ENCODE measurements at regions of chr6 and their contacts with region 1.

Region 1: GRCh38 chr6:110873981-110874879 is at the start of gene AMD1:
- H3K4me3 ChIP-seq: peak within 1 kb of the TSS; percentile 92
- H3K27ac ChIP-seq: peak within 1 kb of the TSS; percentile 96
- H3K4me1 ChIP-seq: peaks cover 7% of the 10 kb centered on the region
- CTCF ChIP-seq: peak; percentile 37; the same call in 1 of the 2 replicates

Region 2: GRCh38 chr6:110682460-110682853 is 191.8 kb before region 1 on chr6:
- CTCF ChIA-PET with region 1: interaction called, 40 read pairs
- POLR2A ChIA-PET with region 1: interaction called, 34 read pairs
- H3K4me3 ChIP-seq: no peak overlapping the region
- H3K27ac ChIP-seq: no peak overlapping the region
- H3K4me1 ChIP-seq: no peaks in the 10 kb centered on the region
- CTCF ChIP-seq: peak; percentile 50; the same call in 1 of the 2 replicates

Region 3: GRCh38 chr6:110809792-110810191 is 64.4 kb before region 1 on chr6:
- CTCF ChIA-PET with region 1: interaction called, 13 read pairs
- POLR2A ChIA-PET with region 1: interaction called, 339 read pairs
- H3K4me3 ChIP-seq: no peak overlapping the region
- H3K27ac ChIP-seq: no peak overlapping the region
- H3K4me1 ChIP-seq: peaks cover 10% of the 10 kb centered on the region; the same call in 1 of the 2 replicates
- CTCF ChIP-seq: no peak

Region 4: GRCh38 chr6:110859335-110859792 is 14.9 kb before region 1 on chr6:
- CTCF ChIA-PET with region 1: interaction called, 6 read pairs
- POLR2A ChIA-PET with region 1: interaction called, 37 read pairs
- H3K4me3 ChIP-seq: no peak overlapping the region
- H3K27ac ChIP-seq: no peak overlapping the region
- H3K4me1 ChIP-seq: no peaks in the 10 kb centered on the region
- CTCF ChIP-seq: no peak

Region 5: DNA sequence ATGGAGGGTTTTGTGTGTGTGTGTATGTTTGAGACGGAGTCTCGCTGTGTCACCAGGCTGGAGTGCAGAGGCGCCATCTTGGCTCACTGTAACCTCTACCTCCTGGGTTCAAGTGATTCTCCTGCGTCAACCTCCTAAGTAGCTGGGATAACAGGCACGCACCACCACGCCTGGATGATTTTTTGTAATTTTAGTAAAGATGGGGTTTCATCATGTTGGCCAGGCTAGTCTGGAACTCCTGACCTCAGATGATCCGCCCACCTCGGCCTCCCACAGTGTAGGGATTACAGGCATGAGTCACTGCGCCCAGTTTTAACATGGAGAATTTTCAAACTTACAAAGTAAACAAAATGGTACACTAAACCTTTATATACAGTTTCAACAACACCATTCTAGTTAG is 23.2 kb after region 1 on chr6:
- CTCF ChIA-PET with region 1: interaction called, 6 read pairs
- POLR2A ChIA-PET with region 1: interaction called, 16 read pairs
- H3K4me3 ChIP-seq: no peak overlapping the region
- H3K27ac ChIP-seq: no peak overlapping the region
- H3K4me1 ChIP-seq: no peaks in the 10 kb centered on the region
- CTCF ChIP-seq: no peak

Region 6: DNA sequence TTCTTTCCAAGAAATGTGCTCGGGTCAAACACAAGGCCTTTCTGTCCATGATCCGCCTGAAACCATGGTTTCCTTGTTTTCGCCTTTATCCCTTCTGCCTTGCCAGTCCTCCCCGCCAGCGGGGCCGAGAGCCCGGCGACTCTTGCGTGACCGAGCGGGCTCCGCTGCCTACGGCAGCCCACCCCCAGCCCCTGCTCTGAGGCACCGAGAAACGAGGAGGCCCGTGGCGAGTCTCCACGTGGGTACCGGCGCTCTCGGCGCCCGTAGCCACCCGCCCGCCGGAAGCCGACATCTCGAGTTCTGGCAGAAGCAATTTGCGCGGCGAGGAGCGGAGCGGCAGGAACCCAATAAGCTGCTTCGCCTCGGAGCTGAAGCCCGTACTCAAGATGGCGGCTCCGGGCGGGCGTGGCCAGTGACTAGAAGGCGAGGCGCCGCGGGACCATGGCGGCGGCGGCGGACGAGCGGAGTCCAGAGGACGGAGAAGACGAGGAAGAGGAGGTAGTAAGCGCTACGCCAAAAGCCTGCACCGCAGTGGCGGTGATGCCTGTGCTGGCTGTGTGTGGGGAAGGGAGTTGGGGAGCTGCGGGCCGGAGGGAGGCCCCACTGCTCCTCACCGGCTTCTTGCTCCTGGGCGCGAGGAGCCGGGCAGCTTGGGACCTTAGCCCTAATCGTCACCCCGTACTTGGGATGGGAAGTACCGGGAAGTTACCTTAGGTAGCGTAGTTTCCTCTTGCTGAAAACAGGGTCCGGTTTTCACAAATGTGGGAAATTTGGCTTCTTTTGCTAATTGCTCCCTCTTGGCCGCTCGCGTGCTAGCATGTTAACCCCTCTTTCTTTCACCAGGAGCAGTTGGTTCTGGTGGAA is 84.3 kb after region 1 on chr6 and contains the start of gene GTF3C6:
- CTCF ChIA-PET with region 1: no interaction called
- POLR2A ChIA-PET with region 1: interaction called, 55 read pairs
- H3K4me3 ChIP-seq: peak within 1 kb of the TSS; percentile 95
- H3K27ac ChIP-seq: peak within 1 kb of the TSS; percentile 77
- H3K4me1 ChIP-seq: no peaks in the 10 kb centered on the region
- CTCF ChIP-seq: peak; percentile 53; the same call in 1 of the 2 replicates

Region 7: DNA sequence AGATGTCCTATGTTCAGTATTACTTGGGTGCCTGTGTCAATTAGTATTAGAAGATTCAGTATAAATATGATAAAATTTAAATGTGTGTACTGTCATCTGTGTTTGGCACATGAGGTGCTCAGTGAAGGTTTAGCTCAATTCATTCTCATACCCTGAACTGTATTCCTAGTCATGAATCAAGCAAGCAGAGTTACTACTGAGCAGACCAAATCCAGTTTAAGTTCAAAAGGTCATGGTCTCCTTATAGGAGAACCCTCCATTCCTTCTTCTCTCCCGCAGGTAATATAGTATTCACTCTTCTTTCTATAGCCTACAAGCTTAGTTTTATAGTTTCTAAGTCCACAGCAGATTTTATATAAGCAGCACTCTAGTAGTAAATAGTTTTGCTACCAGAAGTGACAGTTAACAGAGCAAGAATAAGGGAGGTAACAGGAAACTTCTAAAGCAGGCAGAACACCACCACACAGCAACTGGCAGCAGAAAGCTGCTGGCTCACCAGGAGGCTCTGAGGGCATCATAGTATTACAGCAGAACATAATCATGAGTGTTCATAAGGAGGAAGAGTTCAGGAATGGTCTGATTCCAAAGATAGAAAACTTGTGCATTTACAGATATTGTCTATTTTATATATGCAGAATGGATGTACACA is 346.3 kb after region 1 on chr6:
- CTCF ChIA-PET with region 1: no interaction called
- POLR2A ChIA-PET with region 1: no interaction called
- H3K4me3 ChIP-seq: no peak overlapping the region
- H3K27ac ChIP-seq: no peak overlapping the region
- H3K4me1 ChIP-seq: no peaks in the 10 kb centered on the region
- CTCF ChIP-seq: no peak

Region 8: GRCh38 chr6:111388681-111389080 is 514.5 kb after region 1 on chr6:
- CTCF ChIA-PET with region 1: no interaction called
- POLR2A ChIA-PET with region 1: no interaction called
- H3K4me3 ChIP-seq: no peak overlapping the region
- H3K27ac ChIP-seq: no peak overlapping the region
- H3K4me1 ChIP-seq: no peaks in the 10 kb centered on the region
- CTCF ChIP-seq: no peak

Measured in HEK293 (cell line).